Activated CD4-positive, alpha-beta T cell treated with anti-CD3 and anti-CD28 coated beads for 36 hours (primary cell): ENCODE measurements at regions of chr11 and their contacts with region 1.

Region 1: DNA sequence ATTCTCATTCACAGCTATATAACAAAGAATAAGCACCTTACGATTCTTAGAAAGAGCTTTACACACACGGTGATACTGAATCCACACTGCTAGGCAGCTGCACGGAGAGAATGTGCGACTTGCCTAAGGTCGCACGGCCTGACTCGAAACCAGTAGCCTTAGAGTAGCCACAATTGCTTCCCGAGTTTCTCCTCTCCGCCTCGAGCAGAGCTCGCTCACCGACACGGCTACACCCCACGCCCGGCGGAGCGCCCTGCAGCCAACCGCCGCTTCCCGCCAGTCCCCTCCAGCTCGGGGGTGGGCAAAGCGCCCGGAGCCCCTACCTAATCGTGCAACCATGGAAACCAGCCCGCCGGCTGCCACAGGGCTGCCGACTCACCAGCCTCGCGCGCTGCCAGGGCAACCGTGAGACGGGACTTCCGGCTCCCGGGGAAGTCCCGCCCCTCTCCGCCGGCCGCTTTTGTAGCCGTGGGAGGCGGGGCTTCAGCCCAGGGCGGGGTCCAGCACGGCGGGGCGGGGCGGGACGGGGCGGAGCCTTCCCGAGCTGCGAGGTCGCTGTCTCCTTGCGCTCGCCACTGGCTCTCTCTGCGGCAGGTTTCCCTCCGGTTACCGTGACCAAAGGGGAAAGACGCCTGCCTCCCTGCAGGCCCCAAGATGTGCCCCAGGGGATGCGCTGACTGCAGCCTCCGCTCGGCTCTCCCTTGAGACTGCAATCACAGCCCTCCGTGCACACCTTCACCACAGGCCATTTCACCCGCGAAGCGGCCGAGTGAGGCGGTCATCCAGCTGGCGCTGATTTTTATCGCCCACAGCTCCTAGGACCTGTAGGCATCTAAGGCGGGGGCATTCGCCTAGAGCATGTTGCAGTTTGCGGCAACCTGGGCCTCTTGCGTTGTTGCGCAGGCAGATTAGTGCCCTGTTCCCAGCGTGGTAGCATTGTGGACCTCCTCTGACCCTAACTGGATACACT is 1.1 kb downstream of the BSCL2 start:
- DNase-seq: peak; percentile 98
- ATAC-seq: peak; percentile 72
- H3K4me3 Mint-ChIP-seq: peak overlapping the region; percentile 82
- H3K27ac Mint-ChIP-seq: peak overlapping the region; percentile 51
- H3K4me1 Mint-ChIP-seq: peaks cover 46% of the 10 kb centered on the region
- H3K27me3 Mint-ChIP-seq: no peaks in the 10 kb centered on the region

Region 2: DNA sequence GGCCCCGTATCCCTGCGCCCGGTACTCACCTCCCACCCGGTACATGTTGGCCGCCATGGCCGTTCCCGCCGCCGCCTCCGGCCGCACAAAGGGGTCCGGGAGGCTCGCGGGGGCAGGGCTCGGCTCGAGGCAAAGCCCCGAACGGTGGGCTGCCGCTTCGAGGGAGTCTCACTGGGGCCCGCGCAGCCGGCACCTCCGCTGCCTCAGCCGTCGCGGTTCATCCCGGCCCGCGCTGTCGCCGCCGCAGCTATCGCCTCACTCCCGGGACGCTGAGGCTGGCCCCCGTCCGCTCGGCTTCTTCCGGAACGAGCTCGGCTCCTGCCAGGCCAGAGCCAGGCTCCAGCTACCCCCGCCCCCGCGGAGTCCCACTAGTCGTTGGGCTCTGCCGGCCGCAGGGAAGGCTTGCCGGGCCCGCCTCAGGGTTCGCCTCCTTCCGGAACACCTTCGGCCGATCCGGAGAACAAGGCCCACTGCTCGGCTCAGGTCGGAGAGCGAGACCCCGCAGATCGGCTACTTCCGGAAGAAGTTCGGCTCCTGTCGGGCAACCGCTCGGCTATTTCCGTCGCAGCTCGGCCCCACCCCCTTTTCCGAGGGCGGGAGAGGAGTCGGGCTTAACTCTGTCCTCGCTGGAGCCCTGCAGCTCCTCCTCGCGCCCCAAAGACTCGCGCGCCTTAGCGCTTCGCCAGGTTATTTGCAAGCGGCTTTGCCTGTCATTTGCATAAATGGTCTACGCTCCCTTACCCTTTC is 104.6 kb before region 1 on chr11 and contains the start of gene MTA2:
- CTCF ChIA-PET with region 1: interaction called, 5 read pairs
- POLR2A ChIA-PET with region 1: interaction called, 4 read pairs
- intact Hi-C with region 1: loop called in 1 of 2 experiments (anchors 2 kb)
- DNase-seq: peak; percentile 100
- ATAC-seq: peak; percentile 89
- H3K4me3 Mint-ChIP-seq: peak within 1 kb of the TSS; percentile 91
- H3K27ac Mint-ChIP-seq: peak within 1 kb of the TSS; percentile 96
- H3K4me1 Mint-ChIP-seq: peaks cover 51% of the 10 kb centered on the region
- H3K27me3 Mint-ChIP-seq: no peaks in the 10 kb centered on the region
- total RNA-seq, gene MTA2: 159 to 179 TPM

Region 3: GRCh38 chr11:62645956-62646824 is 60.0 kb before region 1 on chr11 and contains the start of gene GANAB:
- CTCF ChIA-PET with region 1: no interaction called
- POLR2A ChIA-PET with region 1: no interaction called
- intact Hi-C with region 1: loop called in 1 of 2 experiments (anchors 1 kb)
- DNase-seq: peak; percentile 100
- ATAC-seq: peak; percentile 99
- H3K4me3 Mint-ChIP-seq: peak within 1 kb of the TSS; percentile 93
- H3K27ac Mint-ChIP-seq: peak within 1 kb of the TSS; percentile 93
- H3K4me1 Mint-ChIP-seq: peaks cover 34% of the 10 kb centered on the region
- H3K27me3 Mint-ChIP-seq: no peaks in the 10 kb centered on the region
- total RNA-seq, gene GANAB: 208 to 218 TPM

Region 4: DNA sequence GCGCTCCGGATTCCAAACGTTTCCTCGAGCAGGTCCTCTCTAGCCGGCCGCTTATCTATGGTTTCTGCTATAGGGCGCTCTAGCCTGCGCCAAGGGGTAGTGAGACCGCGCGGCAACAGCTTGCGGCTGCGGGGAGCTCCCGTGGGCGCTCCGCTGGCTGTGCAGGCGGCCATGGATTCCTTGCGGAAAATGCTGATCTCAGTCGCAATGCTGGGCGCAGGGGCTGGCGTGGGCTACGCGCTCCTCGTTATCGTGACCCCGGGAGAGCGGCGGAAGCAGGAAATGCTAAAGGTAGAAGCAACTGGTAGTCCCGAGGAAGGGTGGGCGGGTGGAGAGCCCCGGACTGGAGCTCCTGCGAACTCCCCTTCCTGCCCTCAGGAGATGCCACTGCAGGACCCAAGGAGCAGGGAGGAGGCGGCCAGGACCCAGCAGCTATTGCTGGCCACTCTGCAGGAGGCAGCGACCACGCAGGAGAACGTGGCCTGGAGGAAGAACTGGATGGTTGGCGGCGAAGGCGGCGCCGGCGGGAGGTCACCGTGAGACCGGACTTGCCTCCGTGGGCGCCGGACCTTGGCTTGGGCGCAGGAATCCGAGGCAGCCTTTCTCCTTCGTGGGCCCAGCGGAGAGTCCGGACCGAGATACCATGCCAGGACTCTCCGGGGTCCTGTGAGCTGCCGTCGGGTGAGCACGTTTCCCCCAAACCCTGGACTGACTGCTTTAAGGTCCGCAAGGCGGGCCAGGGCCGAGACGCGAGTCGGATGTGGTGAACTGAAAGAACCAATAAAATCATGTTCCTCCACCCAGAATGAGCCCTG is 34.4 kb before region 1 on chr11 and contains the starts of genes LBHD1 and UQCC3:
- CTCF ChIA-PET with region 1: interaction called, 3 read pairs
- POLR2A ChIA-PET with region 1: interaction called, 16 read pairs
- intact Hi-C with region 1: loop called in 1 of 2 experiments (anchors 5 kb)
- DNase-seq: peak; percentile 86
- ATAC-seq: peak; percentile 88
- H3K4me3 Mint-ChIP-seq: peak within 1 kb of the TSS; percentile 91
- H3K27ac Mint-ChIP-seq: peak within 1 kb of the TSS; percentile 96
- H3K4me1 Mint-ChIP-seq: peaks cover 54% of the 10 kb centered on the region
- H3K27me3 Mint-ChIP-seq: no peaks in the 10 kb centered on the region
- total RNA-seq, gene LBHD1: 11.9 to 15.5 TPM
- total RNA-seq, gene UQCC3: 4.1 to 6.4 TPM

Region 5: GRCh38 chr11:62771144-62772021 is 65.2 kb after region 1 on chr11 and contains the start of gene TAF6L:
- CTCF ChIA-PET with region 1: no interaction called
- POLR2A ChIA-PET with region 1: no interaction called
- intact Hi-C with region 1: loop called in 1 of 2 experiments (anchors 1 kb)
- DNase-seq: peak; percentile 98
- ATAC-seq: peak; percentile 87
- H3K4me3 Mint-ChIP-seq: peak within 1 kb of the TSS; percentile 85
- H3K27ac Mint-ChIP-seq: peak within 1 kb of the TSS; percentile 89
- H3K4me1 Mint-ChIP-seq: peaks cover 26% of the 10 kb centered on the region
- H3K27me3 Mint-ChIP-seq: no peaks in the 10 kb centered on the region
- total RNA-seq, gene TAF6L: 10.2 to 12.6 TPM

Region 6: DNA sequence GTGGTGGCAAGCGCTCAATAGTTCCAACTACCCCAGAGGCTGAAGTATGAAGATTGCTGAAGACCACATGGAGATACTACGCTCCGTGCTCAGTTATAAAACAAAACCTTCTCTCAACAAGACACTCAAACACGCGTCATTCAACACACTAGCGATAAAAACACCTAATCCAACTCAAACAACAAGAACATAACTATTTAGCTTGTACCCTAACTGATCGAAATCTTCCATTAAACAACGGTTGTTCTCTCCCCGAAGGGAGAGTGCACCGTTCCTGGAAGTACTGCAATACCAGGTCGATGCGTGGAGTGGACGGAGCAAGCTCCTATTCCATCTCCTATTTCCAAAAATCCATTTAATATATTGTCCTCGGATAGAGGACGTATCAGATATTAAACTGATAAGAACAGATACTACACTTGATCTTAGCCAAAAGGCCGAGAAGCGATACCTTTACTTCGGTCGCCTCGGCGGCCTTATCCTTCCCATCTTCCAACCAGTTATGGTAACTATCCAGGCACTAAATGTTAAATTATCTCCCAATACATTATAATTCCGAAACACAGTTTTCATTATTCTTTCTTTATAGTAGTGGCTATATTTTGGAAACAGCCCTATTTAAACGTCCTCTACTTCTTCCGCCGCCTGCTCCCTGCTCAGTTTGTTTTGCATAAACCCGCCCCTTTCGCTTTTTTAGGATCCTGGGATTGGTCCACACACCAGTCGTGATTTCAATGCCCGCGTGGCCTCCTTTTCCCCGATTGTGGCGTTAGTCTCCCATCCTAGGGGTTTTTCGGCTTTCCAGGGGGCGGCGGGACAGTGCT is 135.4 kb after region 1 on chr11:
- CTCF ChIA-PET with region 1: no interaction called
- POLR2A ChIA-PET with region 1: interaction called, 14 read pairs
- intact Hi-C with region 1: no loop called
- DNase-seq: peak; percentile 86
- ATAC-seq: peak; percentile 67
- H3K4me3 Mint-ChIP-seq: no peak overlapping the region
- H3K27ac Mint-ChIP-seq: no peak overlapping the region
- H3K4me1 Mint-ChIP-seq: peaks cover 24% of the 10 kb centered on the region
- H3K27me3 Mint-ChIP-seq: no peaks in the 10 kb centered on the region